ENCODE measurements at regions of chr16 and their contacts with region 1.

Region 1: GRCh38 chr16:75311383-75311938 is 60.0 kb upstream of the BCAR1 start:
- DNase-seq: no peak
- ATAC-seq: no peak
- H3K4me3 ChIP-seq: no peak overlapping the region
- H3K27ac ChIP-seq: peak overlapping the region; percentile 76 to 82
- H3K4me1 ChIP-seq: peaks cover 3 to 14% of the 10 kb centered on the region in 2 donors
- H3K27me3 ChIP-seq: no peaks in the 10 kb centered on the region

Region 2: DNA sequence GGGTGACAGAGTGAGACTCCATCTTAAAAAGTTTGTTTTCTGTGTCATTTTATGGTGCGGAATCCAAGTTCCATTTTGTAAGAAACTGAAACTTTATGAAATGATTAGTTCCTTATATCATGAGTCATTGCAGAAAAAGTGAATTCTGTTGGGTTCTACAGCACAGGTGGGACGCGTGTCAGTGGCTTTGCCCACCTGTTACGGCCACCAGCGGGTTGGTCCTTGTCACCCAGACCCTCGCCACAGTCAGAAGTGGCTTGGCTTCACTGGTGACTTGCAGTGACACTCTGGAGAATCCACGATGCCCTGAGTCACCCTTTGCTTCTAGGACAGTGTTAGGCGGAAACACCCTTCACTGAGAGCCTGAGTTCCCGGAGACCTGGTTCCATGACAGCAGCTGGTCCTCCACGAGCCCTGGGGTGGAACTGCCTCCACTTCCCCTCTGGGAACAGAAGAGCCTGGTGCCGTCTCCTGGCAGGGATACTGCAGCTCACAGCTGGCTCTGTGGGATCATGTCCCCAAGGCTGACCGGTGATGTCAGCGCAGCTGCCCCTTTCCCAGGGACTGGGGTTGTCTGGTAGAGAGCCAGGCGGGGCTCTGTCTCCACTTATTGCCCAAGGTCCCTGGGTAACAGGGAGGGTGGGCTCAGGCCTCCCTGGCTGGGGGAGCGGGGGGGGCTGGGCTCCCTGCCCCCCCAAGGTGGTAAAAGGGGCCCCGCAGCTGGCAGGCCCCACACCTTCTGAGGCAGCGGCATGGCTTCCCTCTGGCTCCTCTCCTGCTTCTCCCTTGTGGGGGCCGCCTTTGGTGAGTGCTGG is 93.0 kb before region 1 on chr16 and contains the start of gene CTRB1:
- intact Hi-C with region 1: no loop called
- DNase-seq: no peak
- ATAC-seq: no peak
- H3K4me3 ChIP-seq: no peak within 1 kb of the TSS
- H3K27ac ChIP-seq: no peak within 1 kb of the TSS
- H3K4me1 ChIP-seq: no peaks in the 10 kb centered on the region
- H3K27me3 ChIP-seq: no peaks in the 10 kb centered on the region
- total RNA-seq, gene CTRB1: 3.4 to 6.8 TPM

Region 3: GRCh38 chr16:75385507-75386152 is 74.2 kb after region 1 on chr16:
- intact Hi-C with region 1: loop called (anchors 5 kb)
- DNase-seq: no peak
- ATAC-seq: peak; percentile 63
- H3K4me3 ChIP-seq: no peak overlapping the region
- H3K27ac ChIP-seq: no peak overlapping the region
- H3K4me1 ChIP-seq: peaks cover 10 to 20% of the 10 kb centered on the region in 2 donors
- H3K27me3 ChIP-seq: no peaks in the 10 kb centered on the region

Region 4: DNA sequence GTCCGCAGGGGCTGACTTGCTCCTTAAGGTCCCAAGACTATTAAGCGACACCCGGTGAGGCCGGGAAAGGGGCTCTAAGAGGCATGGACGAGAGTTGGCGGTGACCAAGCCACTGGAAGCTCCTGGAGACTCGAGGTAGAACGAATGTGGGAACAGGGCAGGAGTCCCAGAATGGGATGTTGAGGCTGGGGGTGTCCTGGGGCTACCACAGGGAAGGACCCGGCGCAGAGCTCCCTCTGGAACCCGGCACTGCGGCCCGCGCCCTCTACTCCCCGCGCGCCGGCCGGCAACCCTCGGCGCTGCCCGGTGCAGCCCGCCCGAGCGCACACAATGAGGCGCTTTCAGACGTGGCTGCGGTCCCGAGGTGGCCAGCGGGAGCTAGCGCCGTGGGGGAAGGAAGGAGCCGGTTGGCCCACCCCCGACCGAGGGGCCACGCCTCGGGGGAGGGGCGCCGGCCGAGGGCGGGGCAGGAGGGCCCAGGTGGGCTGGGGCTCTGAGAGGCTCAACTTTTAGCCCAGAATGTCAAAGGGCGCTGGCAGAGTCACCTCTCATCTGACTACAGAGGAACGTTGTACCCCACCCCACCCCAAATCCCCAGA is 183.7 kb after region 1 on chr16 and contains the start of gene CHST6:
- intact Hi-C with region 1: no loop called
- DNase-seq: peak; percentile 62 to 85
- ATAC-seq: peak; percentile 82
- H3K4me3 ChIP-seq: peak within 1 kb of the TSS in 1 of 2 donors; percentile 32
- H3K27ac ChIP-seq: no peak within 1 kb of the TSS
- H3K4me1 ChIP-seq: peaks cover 0 to 3% of the 10 kb centered on the region in 2 donors
- H3K27me3 ChIP-seq: no peaks in the 10 kb centered on the region
- total RNA-seq, gene CHST6: 2.4 to 6.0 TPM

Measured in aorta (tissue), 5 donors.